Prostate gland (tissue), 2 donors: ENCODE measurements at regions of chr19 and their contacts with region 1.

Region 1: DNA sequence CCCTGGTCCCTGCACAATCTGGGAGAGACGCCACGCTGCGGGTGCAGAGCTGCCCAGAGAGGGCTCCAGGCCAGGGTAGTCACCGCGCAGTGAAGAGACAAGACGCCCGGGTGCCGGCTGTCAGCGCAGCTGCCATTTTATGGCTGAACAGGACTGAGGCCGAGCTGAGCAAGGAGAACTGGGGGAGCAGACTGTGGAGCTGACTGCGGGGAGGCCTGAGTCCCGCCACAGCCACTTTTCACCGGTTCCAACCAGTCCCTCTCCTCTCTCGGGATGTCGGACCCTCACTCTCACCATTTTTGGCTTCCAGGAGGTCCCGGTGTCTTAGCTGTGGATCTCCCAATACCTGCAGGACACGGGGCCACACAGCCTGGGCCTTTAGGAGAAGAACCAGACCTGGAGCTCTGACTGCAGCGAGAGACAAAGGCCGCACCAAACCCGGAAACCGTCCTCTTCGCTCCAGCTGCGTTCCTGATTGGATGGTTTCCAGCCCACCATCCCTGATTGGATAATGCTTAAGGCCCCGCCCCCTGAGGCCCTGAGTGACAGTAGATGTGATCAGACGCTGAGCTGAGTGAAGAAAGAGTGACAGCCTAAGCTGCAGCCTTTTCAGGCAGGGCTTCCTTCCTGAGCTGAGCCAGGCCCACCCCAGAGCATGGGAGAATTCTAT is at the start of gene ZNF626:
- DNase-seq: peak; percentile 98
- H3K4me3 ChIP-seq: peak within 1 kb of the TSS; percentile 42 to 62
- H3K27ac ChIP-seq: peak within 1 kb of the TSS; percentile 71 to 84
- H3K4me1 ChIP-seq: no peaks in the 10 kb centered on the region
- H3K27me3 ChIP-seq: no peaks in the 10 kb centered on the region
- CTCF ChIP-seq: no peak
- POLR2A ChIP-seq: peak; percentile 60
- total RNA-seq, gene ZNF626: 18.5 to 21.5 TPM

Region 2: GRCh38 chr19:20237761-20238623 is 423.3 kb before region 1 on chr19:
- intact Hi-C with region 1: no loop called
- DNase-seq: peak; percentile 77
- H3K4me3 ChIP-seq: peak overlapping the region; percentile 38 to 44
- H3K27ac ChIP-seq: no peak overlapping the region
- H3K4me1 ChIP-seq: no peaks in the 10 kb centered on the region
- H3K27me3 ChIP-seq: no peaks in the 10 kb centered on the region
- CTCF ChIP-seq: no peak
- POLR2A ChIP-seq: no peak

Region 3: DNA sequence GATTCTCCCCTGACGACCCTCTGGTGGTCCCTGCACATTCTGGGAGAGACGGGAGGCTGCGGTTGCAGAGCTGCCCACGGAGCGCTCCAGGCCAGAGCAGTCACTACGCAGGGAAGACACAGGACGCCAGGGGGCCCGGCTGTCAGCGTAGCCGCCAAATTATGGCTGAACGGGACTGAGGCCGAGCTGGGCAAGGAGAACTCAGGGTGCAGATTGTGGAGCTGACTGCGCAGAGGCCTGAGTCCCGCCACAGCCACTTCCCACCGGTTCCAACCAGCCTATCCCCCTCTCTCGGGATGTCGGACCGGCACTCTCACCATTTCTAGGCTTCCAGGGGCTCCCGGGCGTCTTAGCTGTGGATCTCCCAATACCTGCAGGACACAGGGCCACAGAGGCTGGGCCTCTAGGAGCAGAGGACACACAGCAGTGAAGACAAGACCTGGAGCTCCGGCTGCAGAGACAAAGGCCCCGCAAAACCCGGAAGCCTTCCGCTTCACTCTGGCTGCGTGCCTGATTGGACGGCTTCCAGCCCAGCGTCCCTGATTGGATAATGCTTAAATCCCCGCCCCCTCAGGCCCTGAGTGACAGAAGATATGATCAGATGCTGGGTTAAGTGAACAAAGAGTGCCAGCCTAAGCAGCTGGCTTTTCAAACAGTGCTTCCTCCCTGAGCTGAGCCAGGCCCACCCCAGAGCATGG is 95.8 kb before region 1 on chr19 and contains the start of gene ZNF737:
- intact Hi-C with region 1: loop called (anchors 10 kb)
- DNase-seq: peak; percentile 95
- H3K4me3 ChIP-seq: peak within 1 kb of the TSS; percentile 39 to 61
- H3K27ac ChIP-seq: peak within 1 kb of the TSS; percentile 83 to 84
- H3K4me1 ChIP-seq: no peaks in the 10 kb centered on the region
- H3K27me3 ChIP-seq: no peaks in the 10 kb centered on the region
- CTCF ChIP-seq: peak in 2 of 4 experiments; percentile 38 to 43
- POLR2A ChIP-seq: peak; percentile 51
- total RNA-seq, gene ZNF737: 22.1 to 39.8 TPM

Region 4: GRCh38 chr19:20776083-20777076 is 115.1 kb after region 1 on chr19 and contains the start of gene ZNF66:
- intact Hi-C with region 1: loop called (anchors 10 kb)
- DNase-seq: peak; percentile 98
- H3K4me3 ChIP-seq: peak within 1 kb of the TSS; percentile 63 to 70
- H3K27ac ChIP-seq: peak within 1 kb of the TSS; percentile 64 to 69
- H3K4me1 ChIP-seq: no peaks in the 10 kb centered on the region
- H3K27me3 ChIP-seq: no peaks in the 10 kb centered on the region
- CTCF ChIP-seq: no peak
- POLR2A ChIP-seq: peak; percentile 66
- total RNA-seq, gene ZNF66: 3.6 to 13.5 TPM